CD4-positive, alpha-beta T cell (primary cell): ENCODE measurements at regions of chr19 and their contacts with region 1.

Region 1: DNA sequence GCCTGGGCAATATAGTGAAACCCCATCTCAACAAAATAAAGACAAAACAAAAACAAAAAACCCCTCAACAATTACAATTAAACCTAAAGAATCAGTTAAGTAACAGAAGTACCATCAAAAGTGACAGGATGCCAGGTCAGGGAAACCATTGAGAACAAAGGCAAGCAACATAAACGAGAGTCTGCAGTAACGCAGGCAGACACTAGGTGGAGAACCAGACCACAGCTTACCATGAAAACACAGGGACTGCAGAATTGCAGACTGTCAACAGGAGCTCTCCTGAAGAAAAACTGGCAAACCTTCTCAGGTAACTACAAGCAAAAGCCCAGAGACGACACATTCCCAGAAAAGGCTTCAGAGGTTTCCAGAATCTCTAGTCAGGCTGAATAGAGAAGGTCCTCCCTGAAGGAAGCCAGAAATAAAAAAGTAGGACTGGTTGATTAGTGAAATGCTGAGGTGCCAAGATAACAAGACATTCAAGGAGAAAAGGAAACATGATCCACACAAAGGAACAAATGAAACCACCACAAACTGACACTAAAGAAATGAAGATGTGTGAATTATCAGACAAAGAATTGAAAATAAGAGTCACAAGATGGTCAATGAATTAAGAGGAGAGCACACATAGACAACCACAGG is 2.2 kb upstream of the ZNF665 start:
- DNase-seq: peak; percentile 53 to 89 (median 66)
- ATAC-seq: peak; percentile 59
- H3K4me3 ChIP-seq: no peak overlapping the region
- H3K4me3 Mint-ChIP-seq: peak overlapping the region; percentile 95
- H3K27ac ChIP-seq: no peak overlapping the region
- H3K27ac Mint-ChIP-seq: peak overlapping the region; percentile 92
- H3K4me1 ChIP-seq: peaks cover 28% of the 10 kb centered on the region
- H3K4me1 Mint-ChIP-seq: peaks cover 42% of the 10 kb centered on the region
- H3K27me3 ChIP-seq: peaks cover 0 to 2% of the 10 kb centered on the region in 2 experiments
- H3K27me3 Mint-ChIP-seq: no peaks in the 10 kb centered on the region
- CTCF ChIP-seq: peak; percentile 97

Region 2: GRCh38 chr19:52993323-52994178 is 201.8 kb before region 1 on chr19:
- CTCF ChIA-PET with region 1: interaction called, 6 read pairs
- POLR2A ChIA-PET with region 1: no interaction called
- intact Hi-C with region 1: loop called in 1 of 2 experiments (anchors 5 kb)
- DNase-seq: peak; percentile 66 to 84 (median 74)
- ATAC-seq: peak; percentile 81
- H3K4me3 ChIP-seq: peak overlapping the region; percentile 52
- H3K4me3 Mint-ChIP-seq: peak overlapping the region; percentile 93
- H3K27ac ChIP-seq: no peak overlapping the region
- H3K27ac Mint-ChIP-seq: no peak overlapping the region
- H3K4me1 ChIP-seq: peaks cover 18% of the 10 kb centered on the region
- H3K4me1 Mint-ChIP-seq: peaks cover 20% of the 10 kb centered on the region
- H3K27me3 ChIP-seq: peaks cover 0 to 5% of the 10 kb centered on the region in 2 experiments
- H3K27me3 Mint-ChIP-seq: peaks cover 7% of the 10 kb centered on the region
- CTCF ChIP-seq: peak; percentile 67

Region 3: DNA sequence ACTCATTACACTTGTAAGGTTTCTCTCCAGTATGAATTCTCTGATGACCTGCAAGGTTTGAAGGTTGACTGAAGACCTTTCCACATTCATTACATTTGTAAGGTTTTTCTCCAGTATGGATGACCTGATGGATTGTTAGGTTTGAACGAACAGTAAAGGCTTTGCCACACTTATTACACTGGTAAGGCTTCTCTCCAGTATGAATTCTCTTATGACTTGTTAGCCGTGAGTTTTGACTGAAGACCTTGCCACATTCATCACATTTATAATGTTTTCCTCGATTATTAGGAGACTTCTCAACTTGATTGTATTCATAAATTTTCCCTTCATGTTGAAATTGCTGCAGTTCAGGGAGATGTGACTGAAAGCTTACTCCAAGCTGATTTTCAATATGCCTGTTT is 29.7 kb before region 1 on chr19:
- CTCF ChIA-PET with region 1: no interaction called
- POLR2A ChIA-PET with region 1: no interaction called
- intact Hi-C with region 1: no loop called
- DNase-seq: no peak
- ATAC-seq: no peak
- H3K4me3 ChIP-seq: no peak overlapping the region
- H3K4me3 Mint-ChIP-seq: no peak overlapping the region
- H3K27ac ChIP-seq: no peak overlapping the region
- H3K27ac Mint-ChIP-seq: no peak overlapping the region
- H3K4me1 ChIP-seq: no peaks in the 10 kb centered on the region
- H3K4me1 Mint-ChIP-seq: no peaks in the 10 kb centered on the region
- H3K27me3 ChIP-seq: no peaks in the 10 kb centered on the region
- H3K27me3 Mint-ChIP-seq: no peaks in the 10 kb centered on the region
- CTCF ChIP-seq: no peak

Region 4: DNA sequence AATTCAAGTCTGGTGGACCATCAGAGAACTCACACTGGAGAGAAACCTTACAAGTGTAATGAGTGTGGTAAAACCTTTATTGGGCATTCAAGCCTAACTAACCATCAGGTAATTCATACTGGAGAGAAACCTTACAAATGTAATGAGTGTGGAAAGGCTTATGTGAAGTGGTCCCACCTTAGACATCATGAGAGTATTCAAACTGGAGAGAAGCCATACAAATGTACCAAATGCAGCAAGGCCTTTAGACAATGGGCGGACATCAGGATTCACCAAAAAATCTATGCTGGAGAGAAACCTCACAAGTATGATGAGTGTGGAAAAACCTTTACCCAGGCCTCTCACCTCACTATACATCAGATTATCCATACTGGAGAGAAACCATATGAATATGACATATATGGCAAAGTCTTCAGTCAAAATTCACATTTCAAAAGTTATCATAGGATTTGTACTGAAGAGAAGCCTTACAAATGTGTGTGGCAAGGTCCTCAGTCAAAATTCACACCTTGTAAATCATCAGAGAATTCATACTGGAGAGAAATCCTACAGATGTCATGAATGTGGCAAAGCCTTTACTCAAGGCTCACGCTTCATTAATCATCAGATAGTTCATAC is 17.4 kb after region 1 on chr19:
- CTCF ChIA-PET with region 1: no interaction called
- POLR2A ChIA-PET with region 1: no interaction called
- intact Hi-C with region 1: no loop called
- DNase-seq: no peak
- ATAC-seq: no peak
- H3K4me3 ChIP-seq: no peak overlapping the region
- H3K4me3 Mint-ChIP-seq: no peak overlapping the region
- H3K27ac ChIP-seq: no peak overlapping the region
- H3K27ac Mint-ChIP-seq: no peak overlapping the region
- H3K4me1 ChIP-seq: no peaks in the 10 kb centered on the region
- H3K4me1 Mint-ChIP-seq: no peaks in the 10 kb centered on the region
- H3K27me3 ChIP-seq: no peaks in the 10 kb centered on the region
- H3K27me3 Mint-ChIP-seq: no peaks in the 10 kb centered on the region
- CTCF ChIP-seq: no peak

Region 5: DNA sequence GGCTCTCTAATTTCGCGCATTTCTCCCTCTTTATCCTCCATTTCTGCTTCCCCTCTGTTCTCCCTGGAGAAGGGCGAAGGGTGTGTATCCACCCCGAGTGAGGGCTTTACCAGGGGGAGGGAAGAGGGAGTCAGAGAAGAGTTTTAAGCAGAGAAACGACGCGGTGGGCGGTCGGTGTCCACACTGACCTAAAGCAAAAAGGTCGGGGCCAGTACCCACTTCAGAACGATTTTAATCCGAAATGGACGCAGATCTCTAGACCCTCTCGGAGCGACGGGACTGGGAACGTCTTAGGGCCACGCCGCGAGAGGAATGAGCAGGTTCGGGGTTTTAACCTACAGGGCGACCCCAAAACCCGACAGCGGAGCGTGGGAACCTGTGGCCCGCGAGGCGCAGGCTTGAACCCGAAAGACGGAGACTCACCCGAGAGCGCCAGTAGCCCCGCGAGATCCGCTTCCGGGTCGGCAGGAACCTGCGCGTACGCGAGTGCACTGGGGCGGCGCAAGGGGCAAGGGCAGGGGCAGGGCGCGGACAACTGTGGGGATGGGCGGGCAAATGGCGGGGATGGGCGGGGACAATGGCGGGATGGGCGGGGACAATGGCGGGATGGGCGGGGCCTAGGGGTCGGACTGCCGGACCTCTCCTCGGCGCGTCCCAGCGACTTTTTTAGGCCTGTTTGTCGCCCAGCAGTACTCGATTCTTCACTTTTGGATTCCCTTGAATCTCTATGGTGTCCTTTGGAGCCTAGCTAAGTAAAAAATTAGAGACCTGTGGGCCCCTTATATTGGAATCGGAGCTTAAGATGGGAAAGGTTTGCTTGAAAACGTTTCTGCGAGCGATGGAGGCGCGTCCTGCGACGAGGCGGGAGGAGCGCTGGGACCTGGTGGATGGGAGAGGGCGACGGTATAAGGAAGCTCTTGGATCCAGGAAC is 59.3 kb after region 1 on chr19 and contains the start of gene ZNF677:
- CTCF ChIA-PET with region 1: interaction called, 6 read pairs
- POLR2A ChIA-PET with region 1: no interaction called
- intact Hi-C with region 1: loop called in 1 of 2 experiments (anchors 5 kb)
- DNase-seq: peak; percentile 60 to 90 (median 78)
- ATAC-seq: peak; percentile 98
- H3K4me3 ChIP-seq: peak within 1 kb of the TSS; percentile 85
- H3K4me3 Mint-ChIP-seq: peak within 1 kb of the TSS; percentile 83
- H3K27ac ChIP-seq: peak within 1 kb of the TSS in 1 of 2 donors; percentile 29
- H3K27ac Mint-ChIP-seq: peak within 1 kb of the TSS; percentile 4
- H3K4me1 ChIP-seq: peaks cover 12% of the 10 kb centered on the region
- H3K4me1 Mint-ChIP-seq: peaks cover 7% of the 10 kb centered on the region
- H3K27me3 ChIP-seq: no peaks in the 10 kb centered on the region
- H3K27me3 Mint-ChIP-seq: peaks cover 3% of the 10 kb centered on the region
- CTCF ChIP-seq: no peak
- total RNA-seq, gene ZNF677: 5.2 to 6.4 TPM

Region 6: DNA sequence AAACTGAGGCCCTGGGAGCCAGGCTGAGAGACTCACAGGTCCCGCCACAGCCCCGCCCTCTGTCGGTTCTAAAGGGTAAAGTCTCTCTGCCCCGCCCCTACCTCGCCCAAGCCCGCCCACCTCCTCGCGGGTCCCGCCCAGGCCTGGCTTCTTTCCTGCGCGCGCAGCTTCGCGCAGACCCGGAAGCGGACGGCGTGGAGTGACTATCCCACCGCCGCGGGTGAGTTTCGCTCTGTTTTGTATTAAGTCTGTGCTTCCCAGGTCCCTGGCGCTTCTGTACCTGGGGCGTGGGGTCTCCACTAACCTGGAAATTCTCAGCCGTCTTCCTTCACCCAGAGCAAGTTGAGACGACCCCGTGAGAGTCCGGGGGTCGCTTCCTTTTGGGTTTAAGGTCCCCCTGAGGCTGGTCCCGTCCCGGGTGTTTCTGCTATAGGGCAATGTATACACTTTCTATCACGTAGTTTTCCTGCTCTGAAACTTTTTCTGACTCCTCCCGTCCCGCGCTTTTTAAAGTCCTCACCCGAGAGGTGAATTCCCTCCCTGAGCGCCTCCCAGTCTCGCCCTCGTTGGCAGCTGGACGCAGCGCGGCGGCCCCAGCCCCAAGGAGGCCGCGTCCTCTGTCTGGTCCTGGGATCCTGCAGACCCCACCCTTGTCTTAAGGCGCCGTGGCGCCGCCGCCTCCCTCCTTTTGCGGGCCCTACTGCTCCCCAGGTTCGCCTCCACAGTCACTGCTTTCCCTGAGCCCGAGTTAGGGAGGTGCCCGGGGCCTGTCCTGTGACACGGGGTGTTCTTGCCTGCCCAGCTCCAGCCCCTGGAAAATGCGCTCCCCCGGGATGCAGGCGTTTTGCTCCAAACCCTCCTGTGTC is 199.8 kb after region 1 on chr19 and contains the start of gene ZNF765:
- CTCF ChIA-PET with region 1: interaction called, 5 read pairs
- POLR2A ChIA-PET with region 1: no interaction called
- intact Hi-C with region 1: loop called (anchors 1 to 10 kb)
- DNase-seq: peak; percentile 93 to 99 (median 96)
- ATAC-seq: peak; percentile 97
- H3K4me3 ChIP-seq: peak within 1 kb of the TSS; percentile 77
- H3K4me3 Mint-ChIP-seq: peak within 1 kb of the TSS; percentile 93
- H3K27ac ChIP-seq: peak within 1 kb of the TSS; percentile 35 to 65
- H3K27ac Mint-ChIP-seq: peak within 1 kb of the TSS; percentile 93
- H3K4me1 ChIP-seq: peaks cover 13% of the 10 kb centered on the region
- H3K4me1 Mint-ChIP-seq: peaks cover 33% of the 10 kb centered on the region
- H3K27me3 ChIP-seq: no peaks in the 10 kb centered on the region
- H3K27me3 Mint-ChIP-seq: no peaks in the 10 kb centered on the region
- CTCF ChIP-seq: peak; percentile 56
- total RNA-seq, gene ZNF765: 6.7 to 9.0 TPM

Region 7: DNA sequence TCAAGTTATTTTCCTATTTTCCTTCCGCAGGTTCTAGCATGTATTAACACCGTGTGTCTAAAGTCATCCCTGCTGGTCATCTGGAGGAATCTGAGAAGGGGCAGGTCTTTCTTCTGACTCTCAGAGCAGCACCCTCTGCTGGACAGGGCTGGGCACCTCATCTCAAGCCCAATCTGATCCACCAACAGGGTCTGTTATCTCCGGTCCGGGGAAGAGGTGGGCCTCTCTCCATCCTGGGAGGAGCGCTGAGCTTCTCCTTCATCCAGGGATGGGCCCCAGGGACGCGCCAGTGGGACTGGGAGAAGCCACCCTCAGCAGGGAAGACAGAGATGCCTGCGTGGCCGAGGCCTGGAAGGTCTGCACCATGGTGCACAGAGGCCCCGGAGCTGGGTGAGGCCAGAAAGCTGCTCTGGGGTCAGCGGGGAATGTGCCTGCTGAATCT is 316.6 kb after region 1 on chr19:
- CTCF ChIA-PET with region 1: interaction called, 4 read pairs
- POLR2A ChIA-PET with region 1: no interaction called
- intact Hi-C with region 1: loop called (anchors 1 to 5 kb)
- DNase-seq: peak; percentile 18 to 75 (median 44)
- ATAC-seq: peak; percentile 72
- H3K4me3 ChIP-seq: no peak overlapping the region
- H3K4me3 Mint-ChIP-seq: no peak overlapping the region
- H3K27ac ChIP-seq: no peak overlapping the region
- H3K27ac Mint-ChIP-seq: no peak overlapping the region
- H3K4me1 ChIP-seq: peaks cover 3% of the 10 kb centered on the region
- H3K4me1 Mint-ChIP-seq: no peaks in the 10 kb centered on the region
- H3K27me3 ChIP-seq: peaks cover 0 to 1% of the 10 kb centered on the region in 2 experiments
- H3K27me3 Mint-ChIP-seq: peaks cover 11% of the 10 kb centered on the region
- CTCF ChIP-seq: peak; percentile 68